Activated CD4-positive, alpha-beta memory T cell treated with anti-CD3 and anti-CD28 coated beads for 36 hours (primary cell): ENCODE measurements at regions of chr5 and their contacts with region 1.

Region 1: DNA sequence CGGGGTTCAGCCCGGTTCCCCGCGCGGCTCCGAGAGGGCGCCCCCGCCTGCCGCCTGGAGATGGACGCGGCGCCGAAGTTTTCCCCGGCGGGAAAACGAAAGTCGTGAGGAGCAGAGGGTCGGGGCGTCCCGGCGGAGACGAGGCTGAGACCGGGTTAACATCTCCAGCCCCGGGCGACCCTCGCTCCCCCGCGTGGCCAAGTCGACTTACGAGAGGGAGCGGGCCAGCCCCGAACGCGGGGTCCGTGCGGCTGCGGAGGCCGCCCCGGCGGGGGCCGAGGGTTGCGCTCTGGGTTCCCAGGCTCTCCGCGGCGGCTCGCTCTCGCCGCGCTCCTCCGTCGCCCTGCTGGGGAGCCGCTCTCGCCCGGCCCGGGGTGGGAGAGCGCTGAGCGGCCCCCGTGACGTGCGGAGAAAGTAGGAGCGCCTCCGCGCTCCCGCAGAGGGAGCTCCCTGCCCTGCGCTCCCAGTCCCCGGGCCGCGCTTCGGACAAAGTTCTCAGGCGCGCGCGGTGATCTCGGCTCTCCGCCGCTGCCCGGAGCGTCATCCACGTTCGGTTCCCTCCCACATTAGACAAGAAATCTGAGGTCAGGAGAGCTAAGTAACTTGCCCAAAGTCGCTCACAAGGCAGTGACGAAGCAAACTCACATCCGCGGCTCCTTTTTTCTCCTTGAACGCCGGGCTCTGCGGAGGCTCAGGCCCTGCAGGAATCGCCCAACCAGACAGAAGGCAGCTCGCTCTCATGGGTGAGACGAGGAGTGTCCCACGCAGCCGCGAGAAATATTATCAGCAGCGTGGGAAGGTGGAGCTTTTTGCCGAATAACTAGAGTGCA is 1.2 kb upstream of the GCNT4 start:
- DNase-seq: peak; percentile 71
- H3K4me3 Mint-ChIP-seq: peak overlapping the region; percentile 81
- H3K27ac Mint-ChIP-seq: peak overlapping the region; percentile 84
- H3K4me1 Mint-ChIP-seq: peaks cover 80% of the 10 kb centered on the region
- H3K27me3 Mint-ChIP-seq: peaks cover 4% of the 10 kb centered on the region

Region 2: DNA sequence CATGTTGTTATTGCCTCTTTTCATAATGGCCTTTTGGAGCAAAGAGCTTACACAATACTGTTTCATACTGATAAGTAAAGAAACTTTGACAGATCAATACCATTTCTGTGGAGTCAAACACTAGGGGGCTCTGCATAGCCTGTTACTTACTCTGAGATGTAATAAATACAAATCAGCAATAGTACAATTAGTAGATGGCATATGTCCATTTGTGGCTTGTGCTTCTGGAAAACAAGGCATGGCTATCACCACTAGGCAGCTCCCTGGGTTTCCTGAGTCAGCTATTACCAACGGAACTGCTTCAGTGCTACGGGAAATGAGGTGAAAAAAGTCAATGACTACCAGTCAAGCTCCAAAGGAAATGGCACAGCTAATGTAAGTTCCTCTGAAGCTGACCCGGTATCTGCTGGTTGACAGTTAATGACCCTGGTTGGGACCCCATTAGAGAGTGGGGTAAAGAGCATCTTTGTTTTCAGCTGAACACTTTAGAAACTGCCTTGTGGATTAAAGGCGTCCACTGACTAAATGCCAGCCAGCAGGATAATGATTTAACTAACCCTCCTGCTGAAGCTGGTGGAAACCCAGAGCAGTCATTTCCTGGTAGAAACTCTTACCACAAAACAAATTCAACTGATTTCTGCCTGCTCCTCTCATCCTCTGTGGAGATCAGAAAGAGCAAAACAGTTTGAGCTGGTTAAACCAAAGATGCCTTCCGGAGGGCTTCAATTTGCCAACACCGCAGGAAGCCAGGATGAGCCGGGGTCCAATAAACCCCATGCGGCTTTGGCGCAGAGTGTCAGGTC is 118.4 kb before region 1 on chr5:
- CTCF ChIA-PET with region 1: interaction called, 16 read pairs
- POLR2A ChIA-PET with region 1: interaction called, 3 read pairs
- intact Hi-C with region 1: loop called (anchors 2 kb)
- DNase-seq: peak; percentile 44
- H3K4me3 Mint-ChIP-seq: peak overlapping the region; percentile 42
- H3K27ac Mint-ChIP-seq: peak overlapping the region; percentile 71
- H3K4me1 Mint-ChIP-seq: peaks cover 26% of the 10 kb centered on the region
- H3K27me3 Mint-ChIP-seq: peaks cover 7% of the 10 kb centered on the region

Region 3: DNA sequence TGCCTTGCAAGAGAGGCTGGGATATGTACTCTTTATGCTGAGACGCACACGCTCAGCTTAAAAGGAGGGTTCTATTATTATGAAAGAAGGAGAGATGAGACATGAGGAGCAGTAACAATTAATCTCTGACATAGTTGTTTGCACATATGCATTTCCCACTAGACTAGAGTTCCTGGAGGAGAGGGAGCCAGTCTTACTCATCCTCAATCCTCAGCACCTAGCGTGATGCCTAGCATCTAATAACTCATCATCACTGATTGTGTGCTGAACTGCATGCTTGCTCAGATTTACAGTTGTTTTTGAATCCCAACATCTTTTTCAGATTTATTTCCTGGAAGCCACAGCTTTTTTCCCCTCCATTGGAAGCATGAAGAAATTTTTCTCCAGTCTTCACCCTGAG is 36.6 kb before region 1 on chr5:
- CTCF ChIA-PET with region 1: no interaction called
- POLR2A ChIA-PET with region 1: no interaction called
- intact Hi-C with region 1: no loop called
- DNase-seq: no peak
- H3K4me3 Mint-ChIP-seq: no peak overlapping the region
- H3K27ac Mint-ChIP-seq: no peak overlapping the region
- H3K4me1 Mint-ChIP-seq: peaks cover 2% of the 10 kb centered on the region
- H3K27me3 Mint-ChIP-seq: no peaks in the 10 kb centered on the region

Region 4: DNA sequence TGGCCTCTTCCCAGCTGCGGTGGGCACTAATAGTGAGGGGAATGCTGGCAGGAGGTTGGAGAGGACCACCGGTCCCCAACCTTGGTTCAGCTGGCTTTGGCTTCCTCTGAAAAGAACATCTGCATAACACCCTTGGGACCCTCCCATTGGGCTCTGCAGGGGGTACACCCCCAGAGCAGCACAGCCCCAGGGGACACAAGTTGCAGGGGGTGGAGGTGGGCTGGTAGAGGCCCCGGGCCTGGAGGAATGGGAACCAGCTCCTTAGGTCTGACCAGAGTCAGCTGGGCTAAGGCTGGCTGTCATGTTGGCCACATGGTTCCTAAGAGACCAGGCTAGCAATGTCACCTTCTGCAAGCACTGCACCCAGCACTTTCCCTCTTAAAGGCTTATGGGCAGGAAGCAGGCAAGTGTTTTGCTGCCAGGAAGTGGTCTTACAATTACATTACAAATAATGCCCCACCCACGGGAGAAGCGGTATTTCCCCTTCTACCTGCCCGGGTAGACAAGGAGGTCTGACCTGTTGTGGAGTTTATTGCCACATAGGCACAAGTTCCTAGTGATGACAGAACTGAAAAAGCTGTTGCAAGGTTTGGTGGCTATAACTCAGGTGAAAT is 19.3 kb before region 1 on chr5:
- CTCF ChIA-PET with region 1: interaction called, 13 read pairs
- POLR2A ChIA-PET with region 1: no interaction called
- intact Hi-C with region 1: loop called (anchors 2 kb)
- DNase-seq: peak; percentile 59
- H3K4me3 Mint-ChIP-seq: no peak overlapping the region
- H3K27ac Mint-ChIP-seq: no peak overlapping the region
- H3K4me1 Mint-ChIP-seq: peaks cover 39% of the 10 kb centered on the region
- H3K27me3 Mint-ChIP-seq: no peaks in the 10 kb centered on the region

Region 5: GRCh38 chr5:75265731-75266130 is 212.2 kb after region 1 on chr5:
- CTCF ChIA-PET with region 1: interaction called, 4 read pairs
- POLR2A ChIA-PET with region 1: no interaction called
- intact Hi-C with region 1: loop called (anchors 1 kb)
- DNase-seq: no peak
- H3K4me3 Mint-ChIP-seq: no peak overlapping the region
- H3K27ac Mint-ChIP-seq: no peak overlapping the region
- H3K4me1 Mint-ChIP-seq: no peaks in the 10 kb centered on the region
- H3K27me3 Mint-ChIP-seq: peaks cover 5% of the 10 kb centered on the region

Region 6: DNA sequence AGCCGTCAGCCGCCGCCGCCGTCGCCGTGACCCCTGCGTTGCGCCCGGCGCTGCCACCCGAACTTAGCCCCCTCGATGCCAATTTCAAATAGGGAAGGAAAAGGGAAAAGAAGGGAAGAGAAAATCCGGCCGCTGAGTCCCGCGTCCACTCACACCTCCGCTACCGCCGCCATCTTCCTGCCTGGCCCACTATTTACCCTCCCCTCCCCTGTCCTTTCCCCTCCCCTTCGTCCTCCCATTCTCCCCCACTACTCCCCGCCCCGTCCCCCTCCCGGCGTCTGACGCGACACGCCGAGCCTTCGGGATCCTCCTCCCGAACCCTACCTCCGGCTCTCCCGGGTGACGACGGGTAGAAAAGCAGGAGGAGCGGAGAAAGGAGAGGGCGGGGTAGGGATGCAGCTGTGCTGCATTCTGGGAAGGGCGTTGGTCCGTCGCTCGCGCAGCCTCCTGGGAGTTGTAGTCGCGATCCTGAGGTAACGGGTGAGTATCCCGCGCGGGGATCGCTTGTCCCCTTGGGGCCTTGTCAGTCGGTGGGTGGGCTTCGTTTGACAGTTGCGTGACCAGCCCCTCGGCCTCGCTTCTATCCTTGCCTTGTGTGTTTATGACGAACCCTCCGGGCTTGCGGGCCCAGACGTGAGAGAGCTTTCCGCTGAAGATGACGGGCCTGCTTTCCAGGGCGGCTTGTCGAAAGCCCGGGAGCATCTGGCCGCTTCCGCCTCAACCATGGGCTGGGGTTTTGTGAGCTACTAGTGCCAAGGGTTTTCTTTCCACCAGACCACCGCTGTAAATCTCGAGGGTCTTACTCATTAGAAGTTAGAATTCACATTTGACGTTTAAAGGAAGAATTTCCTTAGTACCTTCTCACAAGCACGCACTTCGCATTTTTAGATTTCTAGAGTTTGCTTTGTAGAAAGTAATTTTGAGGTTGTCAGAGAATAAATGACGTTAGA is 458.2 kb after region 1 on chr5 and contains the starts of genes CERT1 and POLK:
- CTCF ChIA-PET with region 1: interaction called, 4 read pairs
- POLR2A ChIA-PET with region 1: no interaction called
- intact Hi-C with region 1: loop called (anchors 5 kb)
- DNase-seq: peak; percentile 99
- H3K4me3 Mint-ChIP-seq: peak within 1 kb of the TSS; percentile 98
- H3K27ac Mint-ChIP-seq: peak within 1 kb of the TSS; percentile 96
- H3K4me1 Mint-ChIP-seq: peaks cover 55% of the 10 kb centered on the region
- H3K27me3 Mint-ChIP-seq: no peaks in the 10 kb centered on the region
- total RNA-seq, gene CERT1: 32.3 to 34.4 TPM
- total RNA-seq, gene POLK: 33.9 to 36.5 TPM

Region 7: DNA sequence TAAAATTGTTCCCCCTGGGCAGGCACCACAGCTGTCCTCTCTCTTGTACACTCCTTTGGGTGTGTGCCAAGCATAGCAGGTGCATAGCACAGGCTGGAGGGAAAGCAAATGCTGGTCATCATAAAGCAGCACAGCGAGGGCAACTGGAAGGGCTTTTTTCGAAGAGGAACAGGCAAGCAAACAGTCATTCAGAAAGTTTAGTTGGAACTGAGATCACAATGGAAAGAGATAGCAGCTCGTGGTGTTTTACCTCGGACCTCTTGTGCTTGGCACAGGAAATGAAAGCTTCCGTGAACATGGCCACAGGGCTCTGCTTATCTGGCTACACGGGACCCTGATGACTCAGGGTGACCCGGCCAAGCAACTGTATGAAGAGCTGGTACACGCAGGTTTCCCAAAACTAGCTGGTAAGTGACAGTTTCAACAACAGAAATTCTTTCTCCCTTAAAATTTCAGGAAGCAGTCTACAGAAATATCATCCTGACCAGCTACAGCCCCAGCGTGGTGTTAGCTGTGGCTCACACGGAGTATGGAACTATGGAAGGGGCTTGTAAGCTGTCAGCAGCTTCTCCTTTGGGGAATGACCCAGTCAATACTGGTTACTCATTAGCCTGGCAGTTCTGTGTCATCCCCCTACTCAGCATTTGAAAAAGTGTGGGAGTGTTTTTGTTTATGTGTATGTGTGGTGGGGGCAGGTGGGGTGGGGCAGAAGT is 615.6 kb after region 1 on chr5:
- CTCF ChIA-PET with region 1: no interaction called
- POLR2A ChIA-PET with region 1: no interaction called
- intact Hi-C with region 1: loop called (anchors 2 kb)
- DNase-seq: peak; percentile 87
- H3K4me3 Mint-ChIP-seq: peak overlapping the region; percentile 74
- H3K27ac Mint-ChIP-seq: peak overlapping the region; percentile 94
- H3K4me1 Mint-ChIP-seq: peaks cover 36% of the 10 kb centered on the region
- H3K27me3 Mint-ChIP-seq: no peaks in the 10 kb centered on the region

Region 8: GRCh38 chr5:76544268-76544926 is 1490.9 kb after region 1 on chr5:
- CTCF ChIA-PET with region 1: no interaction called
- POLR2A ChIA-PET with region 1: no interaction called
- intact Hi-C with region 1: loop called (anchors 10 kb)
- DNase-seq: peak; percentile 79
- H3K4me3 Mint-ChIP-seq: peak overlapping the region; percentile 74
- H3K27ac Mint-ChIP-seq: peak overlapping the region; percentile 99
- H3K4me1 Mint-ChIP-seq: peaks cover 92% of the 10 kb centered on the region
- H3K27me3 Mint-ChIP-seq: no peaks in the 10 kb centered on the region